ENCODE measurements at regions of chr12 and their contacts with region 1.

Region 1: DNA sequence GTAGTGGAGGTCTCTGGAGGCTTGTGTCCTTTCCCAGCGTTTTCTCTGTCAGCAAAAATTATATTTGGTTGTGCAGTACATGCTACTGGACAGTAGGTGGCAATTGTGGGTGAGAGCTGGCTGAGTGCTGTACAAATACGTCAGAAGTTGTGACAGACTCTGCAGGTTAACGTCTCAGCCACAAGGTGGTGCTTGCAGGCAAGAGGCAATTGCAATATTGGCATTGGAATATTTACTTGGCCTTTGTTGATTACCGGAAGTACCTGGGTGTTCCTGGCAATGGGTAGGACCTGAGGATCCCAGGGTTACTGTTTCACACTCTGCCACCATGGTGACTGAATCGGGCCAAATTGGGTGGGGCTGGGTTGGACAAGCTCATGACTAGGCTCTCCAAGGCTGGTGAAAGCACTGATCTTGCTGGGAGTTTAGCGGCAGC is 333.9 kb upstream of the LMO3 start:
- DNase-seq: peak; percentile 82 to 86
- H3K4me3 ChIP-seq: no peak overlapping the region
- H3K4me3 Mint-ChIP-seq: no peak overlapping the region
- H3K27ac Mint-ChIP-seq: no peak overlapping the region
- H3K4me1 ChIP-seq: no peaks in the 10 kb centered on the region
- H3K4me1 Mint-ChIP-seq: no peaks in the 10 kb centered on the region
- H3K27me3 ChIP-seq: no peaks in the 10 kb centered on the region
- H3K27me3 Mint-ChIP-seq: peaks cover 2% of the 10 kb centered on the region
- CTCF ChIP-seq: peak; percentile 85 to 99

Region 2: GRCh38 chr12:16385782-16386646 is 553.9 kb before region 1 on chr12:
- CTCF ChIA-PET with region 1: interaction called, 4 read pairs
- POLR2A ChIA-PET with region 1: no interaction called
- intact Hi-C with region 1: loop called (anchors 5 kb)
- DNase-seq: peak; percentile 75 to 78
- H3K4me3 ChIP-seq: no peak overlapping the region
- H3K4me3 Mint-ChIP-seq: no peak overlapping the region
- H3K27ac Mint-ChIP-seq: no peak overlapping the region
- H3K4me1 ChIP-seq: peaks cover 8% of the 10 kb centered on the region; the same call in 1 of the 2 replicates
- H3K4me1 Mint-ChIP-seq: peaks cover 9% of the 10 kb centered on the region
- H3K27me3 ChIP-seq: no peaks in the 10 kb centered on the region
- H3K27me3 Mint-ChIP-seq: no peaks in the 10 kb centered on the region
- CTCF ChIP-seq: peak; percentile 74 to 82

Region 3: DNA sequence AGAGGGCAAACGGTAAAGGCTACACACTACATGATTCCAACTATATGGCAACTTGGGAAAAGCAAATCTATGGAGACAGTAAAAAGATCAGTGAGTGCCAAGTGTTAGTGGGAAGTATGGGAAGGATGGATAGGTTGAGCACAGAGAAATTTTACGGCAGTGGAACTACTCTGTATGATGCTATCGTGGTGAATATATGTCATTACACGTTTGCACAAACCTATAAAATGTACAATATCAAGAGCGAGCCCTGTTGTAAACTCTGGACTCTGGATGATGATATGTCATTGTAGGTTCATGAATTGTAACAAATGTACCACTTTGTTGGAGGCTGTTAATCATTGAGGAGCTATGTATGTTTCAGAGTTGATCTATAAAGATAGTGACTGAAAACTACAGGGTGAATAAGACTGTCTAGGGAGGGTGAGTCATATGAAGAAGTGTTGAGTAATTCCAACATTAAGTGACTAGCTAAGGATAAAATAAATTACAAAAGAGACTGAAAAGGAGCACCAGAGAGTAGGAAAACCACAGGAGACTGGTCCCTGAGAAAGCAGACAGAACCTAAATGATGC is 15.3 kb after region 1 on chr12:
- CTCF ChIA-PET with region 1: no interaction called
- POLR2A ChIA-PET with region 1: no interaction called
- intact Hi-C with region 1: no loop called
- DNase-seq: no peak
- H3K4me3 ChIP-seq: no peak overlapping the region
- H3K4me3 Mint-ChIP-seq: no peak overlapping the region
- H3K27ac Mint-ChIP-seq: no peak overlapping the region
- H3K4me1 ChIP-seq: no peaks in the 10 kb centered on the region
- H3K4me1 Mint-ChIP-seq: no peaks in the 10 kb centered on the region
- H3K27me3 ChIP-seq: no peaks in the 10 kb centered on the region
- H3K27me3 Mint-ChIP-seq: peaks cover 5% of the 10 kb centered on the region
- CTCF ChIP-seq: no peak

Region 4: DNA sequence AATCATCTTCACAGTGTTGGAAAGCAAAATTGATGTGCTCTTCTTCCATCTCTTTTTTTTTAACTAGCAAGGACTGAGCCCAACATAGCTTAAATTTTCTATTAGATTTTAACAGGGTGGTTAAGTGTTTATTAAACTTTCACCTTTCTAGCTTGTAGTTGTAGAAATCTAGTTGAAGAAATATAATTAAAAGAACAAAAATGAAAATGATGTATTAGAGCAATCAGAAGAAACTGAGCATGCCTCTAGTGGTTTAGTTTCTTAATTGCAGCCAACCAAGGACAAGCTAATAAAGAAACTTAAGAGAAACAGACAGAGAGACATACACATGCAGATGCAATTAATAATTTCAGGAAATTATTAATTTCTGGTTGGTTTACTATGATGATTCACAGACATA is 339.1 kb after region 1 on chr12:
- CTCF ChIA-PET with region 1: no interaction called
- POLR2A ChIA-PET with region 1: no interaction called
- intact Hi-C with region 1: loop called (anchors 10 kb)
- DNase-seq: no peak
- H3K4me3 ChIP-seq: no peak overlapping the region
- H3K4me3 Mint-ChIP-seq: no peak overlapping the region
- H3K27ac Mint-ChIP-seq: no peak overlapping the region
- H3K4me1 ChIP-seq: peaks cover 7% of the 10 kb centered on the region; the same call in 1 of the 2 replicates
- H3K4me1 Mint-ChIP-seq: peaks cover 3% of the 10 kb centered on the region
- H3K27me3 ChIP-seq: no peaks in the 10 kb centered on the region
- H3K27me3 Mint-ChIP-seq: no peaks in the 10 kb centered on the region
- CTCF ChIP-seq: peak; percentile 53 to 54

Region 5: GRCh38 chr12:17528394-17528793 is 588.5 kb after region 1 on chr12:
- CTCF ChIA-PET with region 1: interaction called, 4 read pairs
- POLR2A ChIA-PET with region 1: no interaction called
- intact Hi-C with region 1: loop called (anchors 1 kb)
- DNase-seq: no peak
- H3K4me3 ChIP-seq: no peak overlapping the region
- H3K4me3 Mint-ChIP-seq: no peak overlapping the region
- H3K27ac Mint-ChIP-seq: no peak overlapping the region
- H3K4me1 ChIP-seq: no peaks in the 10 kb centered on the region
- H3K4me1 Mint-ChIP-seq: no peaks in the 10 kb centered on the region
- H3K27me3 ChIP-seq: no peaks in the 10 kb centered on the region
- H3K27me3 Mint-ChIP-seq: peaks cover under 1% of the 10 kb centered on the region
- CTCF ChIP-seq: no peak

Region 6: DNA sequence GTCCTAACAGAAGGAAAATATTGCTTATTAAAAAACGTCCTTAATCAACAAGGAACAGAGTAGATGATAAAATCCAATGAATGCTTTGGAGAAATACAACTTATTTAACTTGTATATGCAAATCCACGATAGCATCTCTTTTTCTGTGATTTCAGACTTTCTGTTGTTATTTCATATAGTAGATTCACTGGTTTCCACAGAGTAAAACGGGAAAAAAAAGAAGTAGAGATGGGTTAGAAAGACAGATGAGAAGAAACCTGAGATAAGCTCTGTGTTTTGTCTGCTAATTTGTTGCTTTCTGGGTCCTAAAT is 702.4 kb after region 1 on chr12:
- CTCF ChIA-PET with region 1: no interaction called
- POLR2A ChIA-PET with region 1: no interaction called
- intact Hi-C with region 1: loop called (anchors 5 kb)
- DNase-seq: no peak
- H3K4me3 ChIP-seq: no peak overlapping the region
- H3K4me3 Mint-ChIP-seq: no peak overlapping the region
- H3K27ac Mint-ChIP-seq: no peak overlapping the region
- H3K4me1 ChIP-seq: no peaks in the 10 kb centered on the region
- H3K4me1 Mint-ChIP-seq: no peaks in the 10 kb centered on the region
- H3K27me3 ChIP-seq: no peaks in the 10 kb centered on the region
- H3K27me3 Mint-ChIP-seq: peaks cover 3% of the 10 kb centered on the region
- CTCF ChIP-seq: no peak